ENCODE measurements at regions of chr11 and their contacts with region 1.

Region 1: DNA sequence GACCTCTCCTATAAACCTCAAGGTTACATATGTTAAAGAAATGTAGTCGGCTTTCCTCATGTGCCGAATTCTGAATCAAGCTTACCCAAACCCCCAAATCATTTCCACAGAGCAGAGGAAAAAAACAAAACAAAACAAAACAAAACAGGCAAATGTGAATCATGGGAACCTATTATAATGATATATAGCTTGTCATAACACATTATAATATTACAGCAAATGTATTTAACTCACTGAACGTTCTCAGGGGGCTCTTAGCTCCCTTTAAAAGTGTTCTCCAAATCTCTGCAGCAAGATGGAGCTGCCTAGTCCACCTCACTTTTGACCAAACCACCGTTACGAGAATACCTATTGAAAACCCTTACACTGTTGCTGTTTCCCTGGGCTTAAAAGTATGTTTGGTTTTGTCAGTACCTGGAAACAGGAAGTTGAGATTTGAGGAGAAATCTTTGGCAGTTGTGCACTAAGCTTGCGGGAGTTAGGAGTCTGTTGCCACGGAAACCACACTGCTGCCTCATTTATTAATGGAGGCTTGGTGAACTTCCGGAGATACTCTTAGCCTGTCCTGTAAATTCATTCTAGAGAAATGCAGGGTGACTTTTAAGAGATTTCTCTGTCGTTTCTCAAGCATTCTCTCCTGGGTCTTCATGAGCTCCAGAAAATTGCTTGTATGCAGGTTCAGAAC is 167.0 kb upstream of the RASSF10 start:
- DNase-seq: peak; percentile 85
- H3K4me3 ChIP-seq: peak overlapping the region in 1 of 3 experiments; percentile 30
- H3K27ac ChIP-seq: peak overlapping the region; percentile 56
- H3K4me1 ChIP-seq: peaks cover 38% of the 10 kb centered on the region
- H3K27me3 ChIP-seq: no peaks in the 10 kb centered on the region
- CTCF ChIP-seq: no peak
- POLR2A ChIP-seq: no peak

Region 2: GRCh38 chr11:12496171-12497025 is 345.7 kb before region 1 on chr11:
- CTCF ChIA-PET with region 1: no interaction called
- POLR2A ChIA-PET with region 1: no interaction called
- dilution Hi-C with region 1: no loop called
- intact Hi-C with region 1: no loop called
- DNase-seq: no peak
- H3K4me3 ChIP-seq: no peak overlapping the region
- H3K27ac ChIP-seq: no peak overlapping the region
- H3K4me1 ChIP-seq: no peaks in the 10 kb centered on the region
- H3K27me3 ChIP-seq: no peaks in the 10 kb centered on the region
- CTCF ChIP-seq: no peak
- POLR2A ChIP-seq: no peak

Region 3: GRCh38 chr11:12864316-12865156 is 22.4 kb after region 1 on chr11:
- CTCF ChIA-PET with region 1: interaction called, 12 read pairs
- POLR2A ChIA-PET with region 1: no interaction called
- dilution Hi-C with region 1: no loop called
- intact Hi-C with region 1: loop called (anchors 1 kb)
- DNase-seq: peak; percentile 97
- H3K4me3 ChIP-seq: no peak overlapping the region
- H3K27ac ChIP-seq: peak overlapping the region; percentile 32
- H3K4me1 ChIP-seq: peaks cover 7% of the 10 kb centered on the region
- H3K27me3 ChIP-seq: no peaks in the 10 kb centered on the region
- CTCF ChIP-seq: no peak
- POLR2A ChIP-seq: no peak

Measured in endothelial cell of umbilical vein (primary cell).